Sigmoid colon (tissue), 7 donors: ENCODE measurements at regions of chr6 and their contacts with region 1.

Region 1: GRCh38 chr6:30483677-30484279 is 5.5 kb upstream of the HLA-E start:
- DNase-seq: no peak
- H3K4me3 ChIP-seq: no peak overlapping the region
- H3K27ac ChIP-seq: no peak overlapping the region
- H3K4me1 ChIP-seq: peaks cover 0 to 17% (median 8%) of the 10 kb centered on the region in 4 donors
- H3K27me3 ChIP-seq: peaks cover 13 to 35% (median 27%) of the 10 kb centered on the region in 3 donors
- CTCF ChIP-seq: peak; percentile 32 to 52 (median 36)
- EP300 ChIP-seq: no peak
- POLR2A ChIP-seq: no peak

Region 2: GRCh38 chr6:30344868-30345671 is 138.7 kb before region 1 on chr6 and contains the start of gene RPP21:
- intact Hi-C with region 1: no loop called
- DNase-seq: peak; percentile 90
- H3K4me3 ChIP-seq: peak within 1 kb of the TSS; percentile 61 to 92 (median 82)
- H3K27ac ChIP-seq: peak within 1 kb of the TSS; percentile 84 to 96 (median 94)
- H3K4me1 ChIP-seq: peaks cover 0 to 15% (median 10%) of the 10 kb centered on the region in 4 donors
- H3K27me3 ChIP-seq: no peaks in the 10 kb centered on the region
- CTCF ChIP-seq: no peak
- EP300 ChIP-seq: no peak
- POLR2A ChIP-seq: peak; percentile 58 to 77
- total RNA-seq, gene RPP21: 134 to 150 (median 141) TPM

Region 3: DNA sequence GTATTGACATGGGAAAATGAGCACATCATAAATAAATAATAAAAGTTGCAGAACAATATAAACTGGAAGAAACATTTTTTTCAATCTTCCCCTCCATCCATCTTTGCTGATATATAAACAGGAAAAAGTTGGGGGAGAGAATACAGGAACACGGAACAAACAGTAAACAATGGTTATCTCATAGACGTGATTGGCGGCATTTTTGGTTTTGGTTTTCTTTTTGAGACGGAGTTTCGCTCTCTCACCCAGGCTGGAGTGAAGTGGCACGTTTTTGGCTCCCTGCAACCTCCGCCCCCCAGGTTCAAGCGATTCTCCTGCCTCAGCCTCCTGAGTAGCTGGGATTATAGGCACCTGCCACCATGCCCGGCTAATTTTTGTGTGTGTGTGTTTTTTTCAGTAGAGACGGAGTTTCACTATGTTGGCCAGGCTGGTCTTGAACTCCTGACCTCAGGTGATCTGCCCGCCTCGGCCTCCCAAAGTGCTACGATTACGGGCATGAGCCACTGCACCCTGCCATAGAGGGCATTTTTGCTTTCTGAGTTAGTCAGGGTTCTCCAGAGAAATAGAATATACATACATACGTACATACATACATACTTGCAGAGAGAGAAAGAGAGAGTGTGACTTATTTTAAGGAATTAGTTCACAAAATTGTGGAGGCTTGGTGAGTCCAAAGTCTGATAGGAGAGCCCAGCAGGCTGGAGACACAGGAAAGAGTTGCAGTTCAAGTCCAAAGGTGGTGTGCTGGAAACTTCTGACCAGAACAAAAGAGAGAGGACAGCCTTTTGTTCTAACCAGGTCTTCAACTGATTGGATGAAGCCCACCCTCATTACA is 49.9 kb after region 1 on chr6:
- intact Hi-C with region 1: loop called (anchors 2 kb)
- DNase-seq: no peak
- H3K4me3 ChIP-seq: no peak overlapping the region
- H3K27ac ChIP-seq: no peak overlapping the region
- H3K4me1 ChIP-seq: peaks cover 0 to 9% (median 0%) of the 10 kb centered on the region in 4 donors
- H3K27me3 ChIP-seq: no peaks in the 10 kb centered on the region
- CTCF ChIP-seq: no peak
- EP300 ChIP-seq: no peak
- POLR2A ChIP-seq: no peak